ENCODE measurements at regions of chr15 and their contacts with region 1.

Region 1: DNA sequence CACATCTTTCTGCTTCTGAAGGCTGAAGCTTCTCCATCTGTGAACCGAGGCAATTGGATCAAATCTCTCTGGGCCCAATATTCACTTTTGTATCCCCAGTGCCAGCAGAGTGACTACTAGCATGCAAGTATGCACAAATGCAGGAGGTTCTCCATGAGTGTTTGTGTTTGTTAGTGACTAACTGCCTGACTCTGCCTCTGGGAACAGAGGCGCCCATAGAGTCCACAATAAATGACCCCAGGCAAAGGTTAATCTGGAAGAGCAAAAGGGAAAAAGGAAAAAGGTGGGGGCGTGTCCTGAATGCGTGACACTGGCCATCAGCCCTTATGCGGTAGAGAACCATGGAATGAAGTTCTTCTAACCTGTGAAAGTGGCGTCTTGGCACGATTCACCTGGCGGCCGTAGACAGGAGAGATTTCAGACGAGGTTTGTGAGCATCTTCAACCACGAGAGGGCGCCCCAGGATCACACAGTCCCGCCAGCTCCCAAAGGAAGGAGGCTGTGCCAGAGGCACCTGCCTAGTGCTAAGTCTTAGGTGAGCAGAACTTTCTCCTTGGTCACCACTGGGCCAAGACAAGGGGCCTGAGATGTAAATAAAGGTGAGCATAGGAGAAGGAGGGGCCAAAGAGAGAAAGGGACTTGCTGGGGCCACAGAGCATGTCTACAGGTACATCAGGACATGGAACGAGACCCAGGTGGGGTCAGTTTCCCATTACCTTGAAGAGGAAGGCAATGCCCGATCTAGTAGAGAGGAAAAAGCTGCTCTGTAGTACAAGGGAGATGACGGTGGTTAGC is 44.2 kb downstream of the RBPMS2 start:
- DNase-seq: peak; percentile 88
- ATAC-seq: peak; percentile 75
- H3K4me3 ChIP-seq: no peak overlapping the region
- H3K4me3 Mint-ChIP-seq: no peak overlapping the region
- H3K27ac ChIP-seq: no peak overlapping the region
- H3K27ac Mint-ChIP-seq: peak overlapping the region; percentile 46
- H3K4me1 ChIP-seq: peaks cover 4 to 7% of the 10 kb centered on the region in 2 donors
- H3K4me1 Mint-ChIP-seq: peaks cover 10% of the 10 kb centered on the region
- H3K27me3 ChIP-seq: peaks cover 0 to 7% (median 2%) of the 10 kb centered on the region in 4 experiments
- H3K27me3 Mint-ChIP-seq: peaks cover 6% of the 10 kb centered on the region
- CTCF ChIP-seq: peak; percentile 94

Region 2: DNA sequence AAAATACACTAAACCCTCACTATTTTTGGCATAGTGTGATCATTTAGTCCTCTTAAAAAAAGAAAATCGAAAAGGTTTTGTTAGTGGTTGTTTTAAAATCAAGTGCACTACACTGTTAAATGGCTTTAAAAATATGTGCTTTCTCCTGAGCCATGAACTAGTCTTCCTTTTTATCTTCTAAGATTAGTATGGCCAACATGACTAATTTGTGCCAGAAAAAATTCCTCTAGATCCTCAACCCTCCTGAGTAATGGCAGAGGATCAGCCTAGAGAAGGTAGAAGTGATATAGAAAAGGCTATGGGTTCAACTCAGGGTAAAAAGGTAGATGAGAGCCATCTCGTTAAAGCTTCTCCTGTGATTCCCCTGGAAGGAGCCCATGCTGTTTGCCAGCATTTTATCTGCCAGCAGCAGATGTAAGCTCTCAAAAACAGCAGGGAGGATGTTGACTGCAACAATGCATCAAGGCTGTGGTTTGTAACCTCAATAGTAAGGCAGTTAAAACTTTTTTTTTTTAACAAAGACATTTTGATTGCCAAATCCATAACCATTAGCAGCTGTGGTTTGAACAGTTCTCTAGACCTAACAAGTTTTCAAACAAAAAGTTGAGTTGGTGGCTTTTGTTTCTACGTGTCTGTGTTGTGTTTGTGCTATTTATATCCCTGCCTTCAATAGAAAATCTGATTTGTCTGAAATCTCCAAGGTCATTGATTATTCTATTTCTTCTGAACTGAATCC is 301.0 kb before region 1 on chr15:
- CTCF ChIA-PET with region 1: interaction called, 30 read pairs
- POLR2A ChIA-PET with region 1: no interaction called
- intact Hi-C with region 1: loop called (anchors 1 kb)
- DNase-seq: no peak
- ATAC-seq: no peak
- H3K4me3 ChIP-seq: no peak overlapping the region
- H3K4me3 Mint-ChIP-seq: no peak overlapping the region
- H3K27ac ChIP-seq: no peak overlapping the region
- H3K27ac Mint-ChIP-seq: no peak overlapping the region
- H3K4me1 ChIP-seq: no peaks in the 10 kb centered on the region
- H3K4me1 Mint-ChIP-seq: no peaks in the 10 kb centered on the region
- H3K27me3 ChIP-seq: no peaks in the 10 kb centered on the region
- H3K27me3 Mint-ChIP-seq: no peaks in the 10 kb centered on the region
- CTCF ChIP-seq: no peak

Region 3: DNA sequence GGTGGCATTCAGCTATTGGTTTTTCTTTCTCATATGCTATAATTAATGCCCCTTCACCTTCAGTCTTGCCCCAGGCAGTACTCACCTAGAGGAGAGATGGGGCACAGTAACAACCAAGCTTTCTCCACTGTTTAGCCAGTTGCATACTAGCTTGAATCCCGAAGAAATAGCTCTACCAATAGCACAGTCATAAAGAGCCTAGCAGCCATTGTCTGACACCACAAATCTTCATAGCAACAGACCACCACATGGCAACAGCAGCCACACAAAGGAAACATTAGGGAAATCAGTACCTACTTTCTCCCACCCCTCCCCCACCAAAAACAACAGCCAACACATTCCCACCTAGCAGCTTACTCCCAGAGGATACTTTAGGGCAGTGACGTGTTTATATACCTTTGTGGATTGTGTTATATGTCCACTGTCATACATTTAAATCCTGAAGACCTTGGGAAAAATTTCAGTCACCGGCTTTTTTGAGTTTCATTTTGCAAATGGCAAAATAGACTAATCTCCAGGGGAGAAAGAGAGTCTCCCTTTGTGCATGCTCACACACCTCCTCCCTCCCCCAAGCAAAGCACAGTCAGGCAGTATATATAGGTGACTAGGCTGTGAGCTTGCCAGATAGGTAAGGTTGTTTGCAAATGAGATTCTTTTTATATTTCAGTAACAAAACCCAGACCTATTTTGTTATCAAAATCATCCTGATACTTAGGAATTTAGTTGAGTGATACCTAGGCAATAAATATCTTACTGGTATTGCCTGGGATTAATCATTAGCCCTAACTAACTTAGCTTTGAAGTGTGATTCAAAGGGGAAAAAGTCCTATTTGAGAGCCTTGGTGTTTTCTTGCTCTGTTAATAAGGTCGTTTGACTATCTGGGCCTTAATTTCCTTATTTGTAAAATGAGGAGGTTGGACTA is 96.4 kb before region 1 on chr15:
- CTCF ChIA-PET with region 1: no interaction called
- POLR2A ChIA-PET with region 1: no interaction called
- intact Hi-C with region 1: no loop called
- DNase-seq: no peak
- ATAC-seq: no peak
- H3K4me3 ChIP-seq: no peak overlapping the region
- H3K4me3 Mint-ChIP-seq: peak overlapping the region; percentile 1
- H3K27ac ChIP-seq: no peak overlapping the region
- H3K27ac Mint-ChIP-seq: no peak overlapping the region
- H3K4me1 ChIP-seq: peaks cover 16 to 23% of the 10 kb centered on the region in 2 donors
- H3K4me1 Mint-ChIP-seq: peaks cover 29% of the 10 kb centered on the region
- H3K27me3 ChIP-seq: no peaks in the 10 kb centered on the region
- H3K27me3 Mint-ChIP-seq: no peaks in the 10 kb centered on the region
- CTCF ChIP-seq: no peak

Region 4: DNA sequence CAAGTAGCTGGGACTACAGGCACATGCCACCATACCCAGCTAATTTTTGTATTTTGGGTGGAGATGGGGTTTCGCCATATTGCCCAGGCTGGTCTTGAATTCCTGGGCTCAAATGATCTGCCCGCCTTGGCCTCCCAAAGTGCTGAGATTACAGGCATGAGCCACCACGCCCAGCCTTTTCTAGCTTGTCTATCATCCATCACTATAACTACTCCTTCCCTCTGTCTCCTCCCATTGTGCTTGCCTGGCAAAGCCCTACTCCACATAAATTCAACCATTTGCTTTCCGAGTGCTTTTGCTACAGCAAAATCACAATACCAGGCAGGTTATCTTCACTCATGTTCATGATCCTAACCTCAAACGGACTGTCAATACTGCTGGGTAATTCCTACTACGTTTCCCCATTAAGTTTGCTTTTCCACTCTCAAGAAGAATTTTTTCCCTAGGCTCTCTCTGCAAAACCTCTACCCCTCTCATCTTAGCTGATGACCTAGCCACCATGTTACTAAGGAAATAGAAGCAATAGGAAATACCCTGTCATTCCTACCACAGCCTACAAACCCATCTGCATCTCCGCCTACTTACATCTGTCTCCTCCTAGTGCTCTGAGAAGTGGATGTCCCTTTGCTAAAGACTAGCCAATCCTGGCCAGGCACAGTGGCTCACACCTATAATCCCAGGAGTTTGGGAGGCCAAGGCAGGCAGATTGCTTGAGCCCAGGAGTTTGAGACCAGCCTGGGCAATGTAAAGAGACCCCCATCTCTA is 20.4 kb before region 1 on chr15:
- CTCF ChIA-PET with region 1: interaction called, 12 read pairs
- POLR2A ChIA-PET with region 1: no interaction called
- intact Hi-C with region 1: no loop called
- DNase-seq: no peak
- ATAC-seq: no peak
- H3K4me3 ChIP-seq: no peak overlapping the region
- H3K4me3 Mint-ChIP-seq: no peak overlapping the region
- H3K27ac ChIP-seq: no peak overlapping the region
- H3K27ac Mint-ChIP-seq: no peak overlapping the region
- H3K4me1 ChIP-seq: no peaks in the 10 kb centered on the region
- H3K4me1 Mint-ChIP-seq: no peaks in the 10 kb centered on the region
- H3K27me3 ChIP-seq: no peaks in the 10 kb centered on the region
- H3K27me3 Mint-ChIP-seq: no peaks in the 10 kb centered on the region
- CTCF ChIP-seq: no peak

Region 5: DNA sequence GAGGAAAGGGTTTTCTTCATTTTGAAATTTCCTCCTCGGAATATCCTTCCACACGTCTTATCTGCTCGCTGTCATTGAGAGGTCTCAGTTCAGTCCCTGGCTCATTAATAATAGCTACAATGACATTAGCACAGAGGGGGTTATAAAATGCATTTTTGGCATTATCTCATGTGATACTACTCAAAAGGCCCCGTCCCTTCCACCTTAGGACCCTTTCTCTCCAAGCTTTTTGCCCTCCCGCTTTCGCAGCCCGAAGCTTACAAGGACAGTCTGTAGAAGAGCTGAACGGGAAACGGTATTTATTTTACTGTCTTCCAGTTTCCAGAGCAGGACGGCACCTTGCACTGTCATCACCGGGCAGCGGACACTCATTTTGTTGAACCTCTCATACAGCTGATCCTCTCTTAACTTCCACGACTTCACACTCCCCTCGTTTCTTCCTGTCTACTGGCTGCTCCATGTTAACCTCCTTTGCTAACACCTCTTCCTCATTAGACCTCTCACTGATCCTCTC is 104.9 kb after region 1 on chr15:
- CTCF ChIA-PET with region 1: interaction called, 10 read pairs
- POLR2A ChIA-PET with region 1: no interaction called
- intact Hi-C with region 1: no loop called
- DNase-seq: no peak
- ATAC-seq: no peak
- H3K4me3 ChIP-seq: no peak overlapping the region
- H3K4me3 Mint-ChIP-seq: peak overlapping the region; percentile 71
- H3K27ac ChIP-seq: no peak overlapping the region
- H3K27ac Mint-ChIP-seq: peak overlapping the region; percentile 69
- H3K4me1 ChIP-seq: peaks cover 10 to 18% of the 10 kb centered on the region in 2 donors
- H3K4me1 Mint-ChIP-seq: peaks cover 27% of the 10 kb centered on the region
- H3K27me3 ChIP-seq: no peaks in the 10 kb centered on the region
- H3K27me3 Mint-ChIP-seq: no peaks in the 10 kb centered on the region
- CTCF ChIP-seq: peak; percentile 62

Region 6: DNA sequence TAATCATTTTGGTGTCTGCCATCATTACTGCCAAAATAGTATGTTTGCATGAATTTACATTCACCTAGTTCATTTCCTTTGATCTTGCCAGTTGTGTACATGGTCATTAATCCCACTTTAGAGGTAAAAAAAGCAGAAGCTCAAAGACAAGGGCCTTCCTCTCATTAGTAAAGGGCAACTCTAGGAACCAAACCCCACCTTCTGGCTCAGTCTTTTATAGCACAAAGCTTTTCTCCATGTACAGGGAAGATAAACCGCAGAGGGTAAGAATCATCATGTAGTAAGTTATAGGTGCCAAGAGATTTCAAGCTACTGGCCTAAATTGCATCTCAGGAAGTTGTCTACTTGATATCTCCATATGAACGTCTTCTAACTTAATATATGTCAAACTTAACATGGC is 277.8 kb after region 1 on chr15:
- CTCF ChIA-PET with region 1: interaction called, 14 read pairs
- POLR2A ChIA-PET with region 1: no interaction called
- intact Hi-C with region 1: no loop called
- DNase-seq: peak; percentile 32
- ATAC-seq: peak; percentile 62
- H3K4me3 ChIP-seq: no peak overlapping the region
- H3K4me3 Mint-ChIP-seq: no peak overlapping the region
- H3K27ac ChIP-seq: no peak overlapping the region
- H3K27ac Mint-ChIP-seq: no peak overlapping the region
- H3K4me1 ChIP-seq: no peaks in the 10 kb centered on the region
- H3K4me1 Mint-ChIP-seq: peaks cover 2% of the 10 kb centered on the region
- H3K27me3 ChIP-seq: no peaks in the 10 kb centered on the region
- H3K27me3 Mint-ChIP-seq: no peaks in the 10 kb centered on the region
- CTCF ChIP-seq: peak; percentile 12